Mammary epithelial cell (primary cell): ENCODE measurements at regions of chr14 and their contacts with region 1.

Region 1: DNA sequence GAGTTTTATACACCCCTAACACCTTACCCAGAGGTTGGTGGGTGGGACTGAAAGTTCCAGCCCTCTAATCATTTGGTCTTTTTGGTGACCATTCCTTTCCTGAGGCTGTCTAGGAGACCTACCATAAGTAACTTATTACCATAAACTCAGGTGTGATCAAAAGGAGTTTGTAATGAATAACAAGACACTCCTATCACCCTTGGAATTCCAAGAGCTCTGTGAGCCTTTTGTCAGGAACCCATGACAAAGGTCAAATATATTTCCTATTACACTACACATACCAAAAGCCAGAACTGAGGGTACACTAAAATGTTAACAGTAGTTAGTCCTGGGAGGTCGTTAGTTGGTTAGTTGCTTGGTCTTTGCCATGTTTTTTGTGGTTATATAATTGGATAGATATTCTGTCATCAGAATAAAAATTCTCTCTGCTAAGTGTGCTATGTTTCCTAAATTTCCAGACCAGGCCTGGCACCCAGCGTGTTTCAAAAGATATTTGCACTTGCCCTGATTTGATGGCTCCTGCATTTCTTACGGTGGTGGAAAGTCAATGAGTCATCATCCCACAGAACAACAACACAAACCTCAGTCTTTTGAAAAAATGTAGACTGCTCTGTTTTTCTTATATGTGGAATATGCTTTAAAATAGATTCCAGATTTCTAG is 27.0 kb upstream of the AKAP5 start:
- DNase-seq: peak; percentile 75
- H3K4me3 ChIP-seq: no peak overlapping the region
- H3K27ac ChIP-seq: peak overlapping the region; percentile 11
- H3K4me1 ChIP-seq: peaks cover 20% of the 10 kb centered on the region
- H3K27me3 ChIP-seq: no peaks in the 10 kb centered on the region
- CTCF ChIP-seq: no peak

Region 2: GRCh38 chr14:64053694-64054528 is 384.4 kb before region 1 on chr14:
- CTCF ChIA-PET with region 1: no interaction called
- dilution Hi-C with region 1: no loop called
- in situ Hi-C with region 1: no loop called
- intact Hi-C with region 1: no loop called
- DNase-seq: peak; percentile 41
- H3K4me3 ChIP-seq: no peak overlapping the region
- H3K27ac ChIP-seq: peak overlapping the region; percentile 5
- H3K4me1 ChIP-seq: peaks cover 5% of the 10 kb centered on the region
- H3K27me3 ChIP-seq: no peaks in the 10 kb centered on the region
- CTCF ChIP-seq: no peak

Region 3: DNA sequence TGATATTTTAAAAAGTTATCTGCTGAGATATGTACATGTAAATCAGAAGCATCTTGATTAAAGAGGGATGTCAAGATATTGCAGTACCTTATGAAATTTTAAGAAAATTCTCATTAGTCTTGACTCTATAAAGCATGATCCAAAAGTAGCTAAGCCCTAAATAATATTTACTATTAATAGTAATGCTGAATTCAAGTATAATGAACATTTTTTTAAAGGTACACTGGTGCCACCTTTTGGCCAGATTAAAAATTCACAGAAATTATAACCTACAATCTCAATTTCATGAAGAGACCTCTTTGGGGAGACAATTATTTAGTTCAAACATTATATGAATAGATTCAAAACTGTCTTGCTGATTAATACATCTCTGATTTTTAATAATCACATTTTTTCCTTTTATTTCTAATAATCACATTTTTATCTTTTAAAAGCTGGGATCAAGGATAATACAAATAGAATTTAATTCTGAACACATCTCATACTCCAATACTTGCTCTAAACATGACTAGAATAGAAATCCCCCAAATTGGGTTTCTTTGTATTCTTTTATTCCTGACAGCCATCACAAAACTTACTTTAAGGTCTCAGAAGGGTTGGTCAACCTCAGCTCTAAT is 40.4 kb after region 1 on chr14:
- CTCF ChIA-PET with region 1: no interaction called
- dilution Hi-C with region 1: no loop called
- in situ Hi-C with region 1: no loop called
- intact Hi-C with region 1: loop called (anchors 5 kb)
- DNase-seq: peak; percentile 3
- H3K4me3 ChIP-seq: no peak overlapping the region
- H3K27ac ChIP-seq: no peak overlapping the region
- H3K4me1 ChIP-seq: no peaks in the 10 kb centered on the region
- H3K27me3 ChIP-seq: no peaks in the 10 kb centered on the region
- CTCF ChIP-seq: peak; percentile 25 to 34